BJ (cell line): ENCODE measurements at regions of chr18 and their contacts with region 1.

Region 1: GRCh38 chr18:49510393-49511115 is 23.5 kb upstream of the C18orf32 start:
- DNase-seq: no peak
- H3K4me3 ChIP-seq: no peak overlapping the region
- H3K27me3 ChIP-seq: peaks cover 5% of the 10 kb centered on the region; the same call in 1 of the 2 replicates
- CTCF ChIP-seq: peak; percentile 90

Region 2: DNA sequence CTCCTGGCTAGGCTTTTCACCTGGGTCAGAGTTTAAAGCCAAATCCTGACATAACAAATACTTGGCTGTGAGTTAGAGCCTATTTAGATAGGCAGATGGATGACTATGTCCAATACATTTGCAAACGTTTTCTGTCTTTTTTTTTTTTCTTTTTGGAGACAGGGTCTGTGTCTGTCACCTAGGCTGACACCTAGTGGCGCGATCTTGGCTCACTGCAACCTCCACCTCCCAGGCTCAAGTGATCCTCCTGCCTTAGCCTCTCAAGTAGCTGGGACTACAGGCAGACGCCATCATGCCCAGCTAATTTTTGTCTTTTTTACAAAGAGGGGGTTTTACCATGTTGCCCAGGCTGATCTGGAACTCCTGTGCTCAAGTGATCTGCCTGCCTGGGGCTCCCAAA is 174.9 kb before region 1 on chr18:
- CTCF ChIA-PET with region 1: no interaction called
- POLR2A ChIA-PET with region 1: no interaction called
- DNase-seq: no peak
- H3K4me3 ChIP-seq: no peak overlapping the region
- H3K27me3 ChIP-seq: no peaks in the 10 kb centered on the region
- CTCF ChIP-seq: no peak

Region 3: DNA sequence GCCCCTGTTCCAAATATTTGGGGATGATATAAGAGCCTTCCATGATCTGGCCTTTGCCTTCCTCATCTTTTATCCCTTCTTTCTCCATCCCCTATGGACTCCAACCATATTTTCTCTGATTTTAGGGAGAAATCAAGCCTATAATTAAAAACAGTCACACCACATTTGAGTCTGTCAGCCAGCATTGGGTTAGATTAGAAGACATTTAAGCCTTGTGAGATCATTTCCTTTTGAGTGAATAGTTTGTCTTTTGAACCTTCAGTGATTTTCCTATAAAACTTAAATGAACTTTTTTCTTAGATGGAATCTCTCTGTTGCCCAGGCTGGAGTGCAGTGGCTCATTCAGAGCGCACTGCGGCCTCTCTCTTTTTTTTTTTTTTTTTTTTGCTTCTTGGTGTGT is 15.9 kb before region 1 on chr18:
- CTCF ChIA-PET with region 1: interaction called, 24 read pairs
- POLR2A ChIA-PET with region 1: no interaction called
- DNase-seq: no peak
- H3K4me3 ChIP-seq: no peak overlapping the region
- H3K27me3 ChIP-seq: peaks cover 3% of the 10 kb centered on the region; the same call in 1 of the 2 replicates
- CTCF ChIP-seq: no peak

Region 4: DNA sequence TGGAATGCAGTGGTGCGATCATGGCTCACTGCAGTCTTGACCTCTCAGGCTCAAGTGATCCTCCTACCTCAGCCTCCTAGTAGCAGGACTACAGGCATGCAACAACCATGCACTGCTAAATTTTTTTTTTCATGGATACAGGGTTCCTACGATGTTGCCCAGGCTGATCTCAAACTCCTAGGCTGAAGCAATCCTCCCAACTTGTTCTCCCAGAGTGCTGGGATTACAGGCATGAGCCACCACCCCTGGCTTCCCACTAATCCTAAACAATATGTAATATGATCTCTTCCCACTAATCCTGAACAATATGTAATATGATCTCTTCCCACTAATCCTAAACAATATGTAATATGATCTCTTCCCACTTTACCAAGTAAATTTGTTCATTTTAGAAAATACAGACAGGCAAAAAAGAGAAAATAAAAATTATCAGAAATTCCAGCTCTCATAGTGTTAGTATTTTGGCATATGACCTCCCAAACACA is 10.1 kb after region 1 on chr18:
- CTCF ChIA-PET with region 1: interaction called, 22 read pairs
- POLR2A ChIA-PET with region 1: no interaction called
- DNase-seq: no peak
- H3K4me3 ChIP-seq: no peak overlapping the region
- H3K27me3 ChIP-seq: peaks cover 1% of the 10 kb centered on the region; the same call in 1 of the 2 replicates
- CTCF ChIP-seq: no peak

Region 5: GRCh38 chr18:49768051-49768391 is 257.5 kb after region 1 on chr18:
- CTCF ChIA-PET with region 1: interaction called, 10 read pairs
- POLR2A ChIA-PET with region 1: no interaction called
- DNase-seq: no peak
- H3K4me3 ChIP-seq: no peak overlapping the region
- H3K27me3 ChIP-seq: peaks cover 2% of the 10 kb centered on the region
- CTCF ChIP-seq: peak; percentile 73

Region 6: DNA sequence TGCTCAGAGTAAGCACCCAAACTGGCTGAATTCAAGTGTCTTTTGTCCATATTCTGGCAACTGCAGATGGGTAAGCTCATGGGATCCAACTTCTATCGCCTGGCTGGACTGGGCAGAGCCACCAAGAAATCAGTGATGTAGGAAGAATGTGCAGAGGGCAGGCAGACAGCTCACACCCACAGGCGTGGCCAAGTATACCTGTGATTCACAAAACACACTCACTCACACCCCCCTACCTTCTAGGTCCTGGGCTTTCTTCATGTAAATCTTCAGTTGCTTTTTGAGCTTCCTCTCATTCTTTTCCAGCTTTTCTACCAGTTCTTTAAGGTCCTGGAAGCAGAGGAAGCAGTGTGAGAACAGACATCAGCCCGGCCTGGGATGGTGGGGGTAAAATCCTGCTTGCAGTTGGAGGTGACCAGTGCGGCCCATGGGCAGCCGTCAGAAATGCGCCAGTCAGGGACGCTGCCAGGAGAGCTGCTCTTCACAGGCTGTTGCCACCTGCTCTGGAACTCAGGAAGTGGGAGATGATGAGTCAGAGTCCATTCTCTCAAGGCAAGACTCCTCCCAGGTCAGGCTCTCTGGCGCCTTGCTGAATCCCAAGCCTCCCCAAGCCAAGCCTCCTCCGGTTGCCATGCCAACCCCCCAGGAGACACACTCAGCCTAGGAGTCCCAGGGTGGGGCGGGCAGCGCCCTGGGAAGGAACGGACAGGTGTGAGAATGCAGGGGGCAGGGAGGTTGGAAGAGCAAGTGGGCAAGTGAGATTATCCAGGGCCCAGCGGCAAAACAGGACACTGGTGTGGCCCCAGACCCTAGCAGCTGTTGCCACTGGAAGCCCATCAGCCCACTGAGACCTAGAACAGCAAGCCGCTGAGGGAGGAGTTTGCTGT is 339.0 kb after region 1 on chr18:
- CTCF ChIA-PET with region 1: interaction called, 258 read pairs
- POLR2A ChIA-PET with region 1: no interaction called
- DNase-seq: peak; percentile 66
- H3K4me3 ChIP-seq: no peak overlapping the region
- H3K27me3 ChIP-seq: 0 out of 2 replicates have a peak, but pooled peaks cover 2% of the 10 kb centered on the region
- CTCF ChIP-seq: no peak

Region 7: DNA sequence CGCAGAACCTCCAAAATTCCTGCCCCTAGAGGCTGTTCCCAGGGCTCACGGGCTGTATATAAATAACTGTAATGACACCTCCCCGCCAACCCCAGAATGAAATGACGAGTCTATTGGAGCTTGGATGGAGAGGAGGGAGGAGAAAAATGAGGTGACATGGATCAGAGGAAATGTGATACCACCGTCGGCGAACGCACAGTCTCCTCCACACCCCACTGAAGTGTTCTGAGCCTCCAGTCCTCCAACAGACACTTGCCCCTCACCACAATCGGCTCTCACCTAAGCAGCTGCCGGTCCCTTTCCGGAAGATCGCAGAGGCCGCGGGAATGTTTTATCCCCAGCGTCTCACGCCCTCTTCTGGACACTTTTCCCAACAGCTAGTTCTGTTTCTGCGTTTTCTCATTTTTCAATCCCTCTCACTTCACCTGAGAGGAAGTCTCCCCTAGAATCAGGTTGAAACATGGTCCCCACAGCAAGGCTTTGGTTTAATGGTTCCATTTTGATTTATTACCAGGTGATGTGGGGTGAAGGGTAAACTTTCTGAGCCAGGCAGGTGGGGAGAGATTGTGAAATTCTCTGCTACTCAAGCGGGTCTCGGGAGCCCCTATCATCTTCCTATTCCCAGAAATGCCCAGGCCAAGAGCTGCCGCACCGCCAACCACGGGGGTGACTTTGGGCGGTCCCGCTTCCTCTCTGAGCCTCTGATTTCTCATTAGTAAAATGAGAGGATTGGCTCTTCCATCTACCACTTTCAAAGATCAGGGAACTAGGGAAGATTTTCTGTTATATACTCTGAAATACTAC is 693.4 kb after region 1 on chr18:
- CTCF ChIA-PET with region 1: interaction called, 10 read pairs
- POLR2A ChIA-PET with region 1: no interaction called
- DNase-seq: no peak
- H3K4me3 ChIP-seq: no peak overlapping the region
- H3K27me3 ChIP-seq: peaks cover 3% of the 10 kb centered on the region; the same call in 1 of the 2 replicates
- CTCF ChIP-seq: peak; percentile 64